Activated B cell treated with CpG ODN at 0.5 μM for 24 hours (primary cell): ENCODE measurements at regions of chr7 and their contacts with region 1.

Region 1: GRCh38 chr7:158976849-158977593 is 120.7 kb downstream of the DYNC2I1 start:
- DNase-seq: peak; percentile 78
- ATAC-seq: peak; percentile 91
- H3K4me3 Mint-ChIP-seq: peak overlapping the region; percentile 90
- H3K27ac Mint-ChIP-seq: peak overlapping the region; percentile 67
- H3K4me1 Mint-ChIP-seq: peaks cover 14% of the 10 kb centered on the region
- H3K27me3 Mint-ChIP-seq: no peaks in the 10 kb centered on the region
- CTCF ChIP-seq: peak; percentile 73

Region 2: GRCh38 chr7:158394936-158395335 is 582.1 kb before region 1 on chr7:
- CTCF ChIA-PET with region 1: no interaction called
- POLR2A ChIA-PET with region 1: no interaction called
- intact Hi-C with region 1: loop called (anchors 2 kb)
- DNase-seq: no peak
- ATAC-seq: no peak
- H3K4me3 Mint-ChIP-seq: no peak overlapping the region
- H3K27ac Mint-ChIP-seq: no peak overlapping the region
- H3K4me1 Mint-ChIP-seq: no peaks in the 10 kb centered on the region
- H3K27me3 Mint-ChIP-seq: no peaks in the 10 kb centered on the region
- CTCF ChIP-seq: no peak

Region 3: GRCh38 chr7:158633055-158633956 is 343.7 kb before region 1 on chr7:
- CTCF ChIA-PET with region 1: no interaction called
- POLR2A ChIA-PET with region 1: no interaction called
- intact Hi-C with region 1: no loop called
- DNase-seq: no peak
- ATAC-seq: no peak
- H3K4me3 Mint-ChIP-seq: no peak overlapping the region
- H3K27ac Mint-ChIP-seq: peak overlapping the region; percentile 50
- H3K4me1 Mint-ChIP-seq: peaks cover 17% of the 10 kb centered on the region
- H3K27me3 Mint-ChIP-seq: no peaks in the 10 kb centered on the region
- CTCF ChIP-seq: no peak

Region 4: GRCh38 chr7:158695726-158696452 is 281.1 kb before region 1 on chr7:
- CTCF ChIA-PET with region 1: interaction called, 78 read pairs
- POLR2A ChIA-PET with region 1: no interaction called
- intact Hi-C with region 1: no loop called
- DNase-seq: no peak
- ATAC-seq: peak; percentile 94
- H3K4me3 Mint-ChIP-seq: peak overlapping the region; percentile 35
- H3K27ac Mint-ChIP-seq: peak overlapping the region; percentile 52
- H3K4me1 Mint-ChIP-seq: peaks cover 9% of the 10 kb centered on the region
- H3K27me3 Mint-ChIP-seq: no peaks in the 10 kb centered on the region
- CTCF ChIP-seq: no peak

Region 5: DNA sequence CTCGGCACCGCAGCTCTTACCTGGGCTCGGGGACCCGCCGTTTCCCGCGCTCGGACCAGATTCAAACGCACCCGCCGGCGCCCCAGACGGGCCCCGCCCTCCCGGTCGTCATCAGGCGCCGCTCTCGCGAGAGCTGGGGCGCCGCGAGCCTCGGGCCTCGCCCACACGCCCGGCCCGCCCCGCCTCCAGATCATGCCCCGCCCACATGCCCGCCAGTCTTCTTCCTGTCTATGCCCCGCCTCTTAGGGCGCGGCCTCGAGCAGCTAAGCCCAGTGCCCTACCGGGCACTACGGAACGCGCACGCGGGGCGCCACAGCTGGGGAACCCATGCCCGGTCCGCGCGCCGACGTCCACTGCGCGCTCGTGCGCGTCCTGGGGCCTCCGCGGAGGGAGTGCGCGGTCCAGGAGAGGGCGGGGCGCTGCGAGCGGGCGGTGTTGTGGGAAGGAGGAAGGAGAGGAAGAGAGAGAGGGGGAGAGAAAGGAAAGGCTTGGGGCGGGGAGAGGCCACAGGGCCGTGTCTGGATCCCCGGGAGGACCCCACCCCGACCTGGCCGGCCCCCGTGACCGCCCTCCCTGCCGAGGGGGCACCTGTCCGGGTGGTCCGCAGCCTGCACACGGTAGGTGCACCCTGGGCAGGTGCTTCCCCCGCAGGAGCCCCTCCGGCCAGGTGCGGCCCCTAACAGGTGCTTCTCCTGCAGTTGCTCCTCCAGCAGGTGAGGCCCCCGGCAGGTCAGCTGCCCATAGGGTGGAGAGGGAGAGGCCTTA is 272.1 kb before region 1 on chr7 and contains the start of gene NCAPG2:
- CTCF ChIA-PET with region 1: interaction called, 5 read pairs
- POLR2A ChIA-PET with region 1: no interaction called
- intact Hi-C with region 1: loop called (anchors 2 kb)
- DNase-seq: peak; percentile 97
- ATAC-seq: peak; percentile 98
- H3K4me3 Mint-ChIP-seq: peak within 1 kb of the TSS; percentile 90
- H3K27ac Mint-ChIP-seq: peak within 1 kb of the TSS; percentile 69
- H3K4me1 Mint-ChIP-seq: peaks cover 13% of the 10 kb centered on the region
- H3K27me3 Mint-ChIP-seq: no peaks in the 10 kb centered on the region
- CTCF ChIP-seq: no peak
- total RNA-seq, gene NCAPG2: 8.2 and 11.0 TPM in 2 replicates

Region 6: DNA sequence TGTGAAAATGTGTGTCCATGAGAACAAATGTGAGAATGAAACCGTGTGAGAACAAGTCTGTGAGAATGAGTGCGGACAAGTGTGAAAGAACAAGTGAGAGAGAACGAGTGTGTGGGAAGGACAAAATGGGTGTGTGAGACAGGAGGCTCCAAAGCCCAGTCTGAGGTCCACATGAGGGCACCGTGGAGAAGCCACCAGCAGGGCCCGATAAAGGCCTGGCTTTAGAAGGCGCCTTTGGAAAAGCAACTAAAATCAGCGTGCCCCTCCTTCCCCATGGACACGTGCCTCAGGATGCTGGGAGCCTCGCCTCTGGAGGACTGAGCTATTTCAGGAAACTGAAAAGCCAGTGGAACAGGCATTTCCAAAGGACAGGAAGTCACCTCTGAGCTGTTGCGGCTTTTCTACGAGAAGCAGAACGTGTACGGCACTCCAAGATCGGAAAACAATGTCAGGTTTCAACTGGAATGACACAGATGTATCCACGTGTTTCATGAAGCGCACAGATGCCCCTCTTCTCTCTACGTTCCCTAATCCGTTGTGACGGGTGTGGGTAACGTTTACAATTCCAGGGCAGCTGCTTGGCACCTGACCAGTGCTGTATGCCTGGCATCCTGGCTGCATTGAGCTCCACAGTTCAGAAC is 194.1 kb before region 1 on chr7:
- CTCF ChIA-PET with region 1: no interaction called
- POLR2A ChIA-PET with region 1: no interaction called
- intact Hi-C with region 1: loop called (anchors 2 kb)
- DNase-seq: no peak
- ATAC-seq: no peak
- H3K4me3 Mint-ChIP-seq: no peak overlapping the region
- H3K27ac Mint-ChIP-seq: no peak overlapping the region
- H3K4me1 Mint-ChIP-seq: no peaks in the 10 kb centered on the region
- H3K27me3 Mint-ChIP-seq: no peaks in the 10 kb centered on the region
- CTCF ChIP-seq: no peak